Activated CD4-positive, alpha-beta T cell treated with anti-CD3 and anti-CD28 coated beads for 36 hours (primary cell): ENCODE measurements at regions of chr9 and their contacts with region 1.

Region 1: DNA sequence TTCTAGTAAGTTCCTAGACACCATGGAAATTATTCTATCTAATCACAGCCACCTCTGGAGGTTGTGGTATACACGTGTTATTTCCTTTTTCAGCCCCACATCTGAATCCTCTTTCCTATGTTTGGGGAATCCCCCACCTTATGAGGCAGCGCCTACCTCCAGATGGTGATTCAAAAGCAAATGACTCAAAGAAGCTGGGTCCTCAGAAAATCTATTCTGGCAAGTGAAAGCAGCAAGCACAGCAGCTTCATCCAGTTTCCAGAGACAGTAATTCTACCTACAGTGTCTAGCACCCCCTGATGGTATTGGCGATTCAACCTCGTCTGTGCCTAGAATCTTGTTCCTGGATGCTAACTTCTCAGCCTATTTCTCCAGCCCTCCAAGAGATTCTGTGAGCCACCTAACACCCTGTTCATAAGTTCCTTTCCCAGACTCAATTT is 43.0 kb downstream of the STRBP start:
- DNase-seq: peak; percentile 76
- ATAC-seq: peak; percentile 95
- H3K4me3 Mint-ChIP-seq: peak overlapping the region; percentile 27
- H3K27ac Mint-ChIP-seq: peak overlapping the region; percentile 86
- H3K4me1 Mint-ChIP-seq: peaks cover 30% of the 10 kb centered on the region
- H3K27me3 Mint-ChIP-seq: no peaks in the 10 kb centered on the region

Region 2: GRCh38 chr9:122464633-122465567 is 760.5 kb before region 1 on chr9:
- CTCF ChIA-PET with region 1: no interaction called
- POLR2A ChIA-PET with region 1: no interaction called
- intact Hi-C with region 1: loop called in 1 of 2 experiments (anchors 2 kb)
- DNase-seq: peak; percentile 81
- ATAC-seq: peak; percentile 84
- H3K4me3 Mint-ChIP-seq: peak overlapping the region; percentile 68
- H3K27ac Mint-ChIP-seq: peak overlapping the region; percentile 79
- H3K4me1 Mint-ChIP-seq: peaks cover 14% of the 10 kb centered on the region
- H3K27me3 Mint-ChIP-seq: peaks cover 27% of the 10 kb centered on the region

Region 3: GRCh38 chr9:122904823-122905710 is 320.3 kb before region 1 on chr9 and contains the start of gene RC3H2:
- CTCF ChIA-PET with region 1: no interaction called
- POLR2A ChIA-PET with region 1: interaction called, 3 read pairs
- intact Hi-C with region 1: loop called in 1 of 2 experiments (anchors 2 kb)
- DNase-seq: peak; percentile 97
- ATAC-seq: peak; percentile 93
- H3K4me3 Mint-ChIP-seq: peak within 1 kb of the TSS; percentile 92
- H3K27ac Mint-ChIP-seq: peak within 1 kb of the TSS; percentile 94
- H3K4me1 Mint-ChIP-seq: peaks cover 23% of the 10 kb centered on the region
- H3K27me3 Mint-ChIP-seq: no peaks in the 10 kb centered on the region
- total RNA-seq, gene RC3H2: 21.5 to 24.4 TPM

Region 4: GRCh38 chr9:123081824-123082223 is 143.6 kb before region 1 on chr9:
- CTCF ChIA-PET with region 1: interaction called, 4 read pairs
- POLR2A ChIA-PET with region 1: no interaction called
- intact Hi-C with region 1: loop called in 1 of 2 experiments (anchors 5 kb)
- DNase-seq: peak; percentile 34
- ATAC-seq: peak; percentile 39
- H3K4me3 Mint-ChIP-seq: no peak overlapping the region
- H3K27ac Mint-ChIP-seq: no peak overlapping the region
- H3K4me1 Mint-ChIP-seq: peaks cover 3% of the 10 kb centered on the region
- H3K27me3 Mint-ChIP-seq: no peaks in the 10 kb centered on the region

Region 5: DNA sequence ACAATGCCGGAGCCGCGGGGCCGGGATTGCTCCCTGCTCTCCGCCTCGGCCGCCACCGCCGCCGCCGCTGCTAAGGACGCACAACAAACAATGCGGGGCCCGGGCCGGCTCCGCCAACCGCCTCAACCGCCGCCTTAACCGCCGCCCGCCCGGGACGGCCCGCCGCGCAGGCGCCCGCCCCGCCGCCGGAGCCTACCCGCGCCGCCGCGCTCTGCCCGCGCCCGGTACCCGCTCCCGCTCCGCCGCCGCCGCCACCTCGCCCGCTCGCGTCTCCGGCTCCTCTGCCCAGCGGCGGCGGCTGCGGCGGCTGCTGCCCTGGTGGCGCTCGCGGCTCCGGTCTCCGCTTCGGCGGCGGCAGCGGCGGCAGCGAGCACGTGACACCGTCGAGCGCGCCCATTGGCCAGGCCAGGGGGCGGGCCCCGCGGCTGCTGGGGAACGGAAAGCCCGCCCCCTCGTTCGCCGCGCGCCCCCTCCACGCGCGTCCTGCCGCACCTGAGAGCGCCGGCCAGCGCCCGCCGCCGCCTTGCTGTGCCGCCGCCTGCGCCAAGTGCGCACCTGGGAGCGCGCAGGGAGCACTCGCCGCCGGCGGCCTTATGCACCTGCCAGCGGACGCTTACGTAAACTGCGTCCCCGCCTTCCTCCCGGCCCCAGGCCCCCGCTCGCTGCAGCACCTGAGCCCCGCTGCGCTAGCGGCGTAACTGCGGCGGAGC is 43.0 kb after region 1 on chr9 and contains the start of gene STRBP:
- CTCF ChIA-PET with region 1: interaction called, 3 read pairs
- POLR2A ChIA-PET with region 1: no interaction called
- intact Hi-C with region 1: loop called (anchors 1 kb)
- DNase-seq: peak; percentile 96
- ATAC-seq: peak; percentile 93
- H3K4me3 Mint-ChIP-seq: peak within 1 kb of the TSS; percentile 73
- H3K27ac Mint-ChIP-seq: peak within 1 kb of the TSS; percentile 26
- H3K4me1 Mint-ChIP-seq: peaks cover 32% of the 10 kb centered on the region
- H3K27me3 Mint-ChIP-seq: no peaks in the 10 kb centered on the region
- total RNA-seq, gene STRBP: 31.6 to 34.8 TPM

Region 6: GRCh38 chr9:123541411-123541810 is 316.0 kb after region 1 on chr9:
- CTCF ChIA-PET with region 1: no interaction called
- POLR2A ChIA-PET with region 1: no interaction called
- intact Hi-C with region 1: no loop called
- DNase-seq: no peak
- ATAC-seq: no peak
- H3K4me3 Mint-ChIP-seq: no peak overlapping the region
- H3K27ac Mint-ChIP-seq: no peak overlapping the region
- H3K4me1 Mint-ChIP-seq: peaks cover 6% of the 10 kb centered on the region
- H3K27me3 Mint-ChIP-seq: no peaks in the 10 kb centered on the region

Region 7: DNA sequence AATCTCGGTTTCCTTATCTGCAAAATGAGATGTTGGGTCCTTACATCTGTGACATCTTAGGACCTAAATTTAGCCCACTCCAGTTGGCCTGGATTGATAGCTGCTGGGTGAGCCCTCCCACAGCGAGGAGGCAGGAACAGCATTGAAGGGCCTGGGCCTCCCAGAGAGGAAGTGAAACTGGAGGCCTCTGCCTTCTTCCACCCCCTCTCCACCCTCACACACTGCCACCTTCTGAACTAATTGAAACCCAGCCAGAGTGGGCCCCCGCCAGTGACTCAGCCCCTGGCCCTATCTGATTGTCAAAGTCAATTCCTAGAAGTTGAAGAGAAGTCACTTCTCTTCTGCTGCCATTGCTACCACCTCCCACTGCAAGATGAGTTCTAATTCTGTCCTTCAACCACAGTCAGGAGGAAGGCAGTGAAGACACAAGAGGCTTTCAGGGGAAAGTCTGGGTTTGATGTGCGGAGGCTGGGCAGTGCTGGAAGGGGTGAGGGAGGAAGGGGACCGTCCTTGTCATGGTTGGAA is 977.1 kb after region 1 on chr9:
- CTCF ChIA-PET with region 1: no interaction called
- POLR2A ChIA-PET with region 1: no interaction called
- intact Hi-C with region 1: loop called in 1 of 2 experiments (anchors 10 kb)
- DNase-seq: peak; percentile 93
- ATAC-seq: peak; percentile 94
- H3K4me3 Mint-ChIP-seq: peak overlapping the region; percentile 56
- H3K27ac Mint-ChIP-seq: peak overlapping the region; percentile 97
- H3K4me1 Mint-ChIP-seq: peaks cover 40% of the 10 kb centered on the region
- H3K27me3 Mint-ChIP-seq: peaks cover 8% of the 10 kb centered on the region